Left ventricle myocardium superior (tissue), 1 donor: ENCODE measurements at regions of chr20 and their contacts with region 1.

Region 1: GRCh38 chr20:34058831-34059230 is 53.2 kb downstream of the EIF2S2 start:
- DNase-seq: no peak
- ATAC-seq: no peak

Region 2: GRCh38 chr20:33947709-33948295 is 111.0 kb before region 1 on chr20:
- intact Hi-C with region 1: no loop called
- DNase-seq: no peak
- ATAC-seq: no peak

Region 3: GRCh38 chr20:34001378-34001777 is 57.5 kb before region 1 on chr20:
- intact Hi-C with region 1: loop called (anchors 10 kb)
- DNase-seq: no peak
- ATAC-seq: no peak